ENCODE measurements at regions of chr1 and their contacts with region 1.

Region 1: DNA sequence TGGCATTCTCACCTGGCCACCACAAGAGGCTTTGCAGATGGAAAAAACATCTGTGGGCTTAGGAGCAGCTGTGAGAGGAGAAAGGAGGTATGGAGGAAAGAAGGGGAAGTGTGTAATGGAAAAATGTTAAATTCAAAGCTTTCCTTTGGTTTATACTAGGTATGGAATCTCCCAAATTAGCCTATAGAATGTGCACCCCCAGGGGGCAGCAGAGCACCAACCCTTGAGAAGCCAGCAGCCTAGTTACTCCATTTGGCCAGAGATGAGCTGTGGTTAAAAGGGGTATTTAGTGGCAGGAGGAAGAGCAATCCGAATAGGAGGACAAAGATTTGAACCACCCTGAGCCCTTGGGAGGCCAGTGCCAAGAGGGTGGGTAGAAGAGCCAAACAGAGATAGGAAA is 97.5 kb upstream of the CTTNBP2NL start:
- DNase-seq: peak; percentile 76
- H3K4me3 Mint-ChIP-seq: no peak overlapping the region
- H3K27ac Mint-ChIP-seq: no peak overlapping the region
- H3K4me1 Mint-ChIP-seq: peaks cover 5% of the 10 kb centered on the region
- H3K27me3 Mint-ChIP-seq: no peaks in the 10 kb centered on the region
- CTCF ChIP-seq: peak; percentile 83

Region 2: GRCh38 chr1:112196731-112197130 is 101.8 kb before region 1 on chr1:
- CTCF ChIA-PET with region 1: no interaction called
- POLR2A ChIA-PET with region 1: no interaction called
- intact Hi-C with region 1: no loop called
- DNase-seq: peak; percentile 29
- H3K4me3 Mint-ChIP-seq: no peak overlapping the region
- H3K27ac Mint-ChIP-seq: no peak overlapping the region
- H3K4me1 Mint-ChIP-seq: no peaks in the 10 kb centered on the region
- H3K27me3 Mint-ChIP-seq: peaks cover 38% of the 10 kb centered on the region
- CTCF ChIP-seq: no peak

Region 3: DNA sequence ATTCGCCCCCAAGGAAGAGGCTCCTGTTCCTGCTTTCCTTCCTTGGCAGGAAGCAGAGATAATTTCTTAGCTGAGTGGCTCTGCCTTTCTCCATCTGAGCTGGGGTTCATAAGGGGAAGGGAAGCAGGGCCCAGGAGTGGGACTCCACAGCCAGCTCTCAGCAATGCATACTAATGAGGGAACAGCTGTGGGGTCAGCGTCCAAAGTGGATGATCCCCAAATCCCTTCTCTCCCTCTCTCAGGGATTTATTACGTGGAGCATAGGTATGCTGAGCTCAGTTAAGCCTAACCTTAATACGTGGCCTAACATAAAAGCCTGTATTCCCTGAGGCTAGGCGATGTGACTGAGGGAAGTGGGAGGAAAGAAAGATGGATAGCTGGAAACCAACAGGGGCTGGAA is 10.2 kb after region 1 on chr1:
- CTCF ChIA-PET with region 1: interaction called, 58 read pairs
- POLR2A ChIA-PET with region 1: interaction called, 3 read pairs
- intact Hi-C with region 1: no loop called
- DNase-seq: no peak
- H3K4me3 Mint-ChIP-seq: no peak overlapping the region
- H3K27ac Mint-ChIP-seq: no peak overlapping the region
- H3K4me1 Mint-ChIP-seq: no peaks in the 10 kb centered on the region
- H3K27me3 Mint-ChIP-seq: peaks cover 46% of the 10 kb centered on the region
- CTCF ChIP-seq: no peak

Region 4: DNA sequence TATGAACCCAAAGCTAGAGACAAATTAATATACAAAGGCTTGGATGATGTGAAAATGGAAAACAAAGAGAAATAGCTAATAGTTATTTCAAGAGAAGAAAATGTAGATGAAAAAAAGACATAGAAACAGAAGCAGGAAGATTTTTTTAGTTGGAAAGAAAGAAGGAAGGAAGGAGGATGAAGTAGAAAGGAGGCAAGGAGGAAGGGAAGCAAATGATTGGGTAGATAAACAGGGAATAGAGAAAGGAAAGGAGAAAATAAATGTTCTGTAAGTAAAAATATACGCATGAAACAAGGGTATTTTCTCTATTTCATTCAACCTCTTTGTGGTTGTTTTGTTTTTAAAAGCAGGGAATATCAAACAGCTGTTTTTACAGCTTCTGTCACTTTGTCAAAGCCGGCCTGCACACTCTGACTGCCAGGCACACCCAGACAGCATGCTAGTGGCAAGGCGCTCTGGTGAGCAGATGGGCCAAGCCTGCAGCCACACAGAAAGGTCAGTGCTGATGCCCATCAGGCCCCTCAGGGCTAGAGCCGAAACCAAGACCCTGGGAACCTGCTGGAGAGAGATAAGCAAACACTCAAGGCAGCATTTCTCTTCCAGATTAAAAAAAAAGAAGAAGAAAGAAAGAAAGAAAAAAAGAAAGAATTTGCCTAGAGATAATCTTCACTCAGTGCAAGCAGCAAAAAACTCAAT is 24.6 kb after region 1 on chr1:
- CTCF ChIA-PET with region 1: interaction called, 10 read pairs
- POLR2A ChIA-PET with region 1: interaction called, 3 read pairs
- intact Hi-C with region 1: no loop called
- DNase-seq: no peak
- H3K4me3 Mint-ChIP-seq: no peak overlapping the region
- H3K27ac Mint-ChIP-seq: no peak overlapping the region
- H3K4me1 Mint-ChIP-seq: peaks cover 23% of the 10 kb centered on the region
- H3K27me3 Mint-ChIP-seq: no peaks in the 10 kb centered on the region
- CTCF ChIP-seq: no peak

Region 5: DNA sequence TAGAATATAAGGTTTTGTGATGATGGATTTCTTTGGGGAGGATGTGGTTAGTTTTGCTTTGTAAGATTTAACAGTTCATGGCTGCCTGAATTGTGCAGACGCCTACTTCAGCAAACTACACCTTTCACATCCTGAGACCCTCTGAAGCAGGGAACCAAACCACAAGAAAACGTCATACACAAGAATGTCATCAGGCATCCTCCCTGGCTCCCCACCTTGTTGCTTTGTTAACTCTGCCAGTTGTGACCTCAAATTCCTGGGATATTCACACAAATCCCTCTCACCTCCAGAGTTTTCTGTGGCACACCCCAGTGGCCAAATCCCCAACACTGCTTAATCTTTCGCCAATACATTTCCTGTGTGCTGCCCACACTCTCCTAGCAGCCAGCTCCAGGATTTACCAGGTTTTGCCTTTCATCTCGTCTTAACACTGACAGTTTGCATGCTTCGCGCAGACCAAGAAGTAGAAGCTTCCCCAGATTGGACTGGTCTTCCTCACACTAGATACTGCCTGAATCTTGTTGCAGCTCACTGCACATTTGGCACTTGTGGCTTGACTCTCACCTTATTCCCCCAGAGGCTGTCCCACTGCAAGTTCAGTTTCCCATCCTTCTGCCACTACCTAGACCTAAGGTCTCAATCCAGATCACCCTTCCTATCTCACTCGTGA is 46.3 kb after region 1 on chr1:
- CTCF ChIA-PET with region 1: interaction called, 27 read pairs
- POLR2A ChIA-PET with region 1: no interaction called
- intact Hi-C with region 1: no loop called
- DNase-seq: no peak
- H3K4me3 Mint-ChIP-seq: no peak overlapping the region
- H3K27ac Mint-ChIP-seq: no peak overlapping the region
- H3K4me1 Mint-ChIP-seq: no peaks in the 10 kb centered on the region
- H3K27me3 Mint-ChIP-seq: peaks cover 30% of the 10 kb centered on the region
- CTCF ChIP-seq: no peak

Region 6: DNA sequence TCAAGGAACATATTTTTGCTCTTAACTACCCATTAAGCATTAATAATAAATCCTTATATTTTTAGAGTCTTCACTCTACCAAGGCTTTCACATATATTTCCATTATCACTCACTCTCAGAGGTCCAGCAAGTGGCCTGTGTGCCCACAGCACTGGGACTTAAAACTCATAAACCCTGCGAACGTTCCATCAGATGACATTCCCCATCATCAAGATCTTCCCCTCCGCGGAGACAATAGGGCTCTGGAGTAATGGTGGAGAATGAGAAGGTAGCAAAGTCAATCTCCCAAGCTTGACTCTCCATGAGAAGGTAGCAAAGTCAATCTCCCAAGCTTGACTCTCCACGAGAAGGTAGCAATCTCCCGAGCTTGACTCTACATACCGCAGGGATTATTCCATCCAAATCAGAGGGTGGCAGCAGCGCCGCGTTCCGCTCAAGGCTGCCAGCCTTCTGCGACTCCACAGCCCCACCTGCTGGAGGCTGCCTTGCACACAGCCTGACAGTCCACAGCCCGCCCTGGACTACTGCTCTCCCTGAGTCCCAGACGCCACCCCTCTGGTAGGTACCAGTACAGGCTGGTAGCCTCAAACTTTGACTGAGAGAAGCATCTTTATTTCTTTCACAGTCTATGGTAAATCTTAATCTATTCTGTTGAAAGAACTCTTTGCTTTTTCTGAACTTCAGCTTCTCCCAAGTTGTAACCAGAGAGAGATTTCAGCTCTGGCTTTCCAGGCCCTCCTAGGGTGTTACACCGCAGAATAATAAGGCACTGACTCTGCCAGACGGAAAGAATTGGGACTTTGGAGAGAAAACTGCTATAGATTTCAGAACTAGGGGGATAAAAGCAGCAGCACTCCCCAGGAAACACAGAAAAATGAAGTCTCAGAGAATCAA is 71.1 kb after region 1 on chr1:
- CTCF ChIA-PET with region 1: interaction called, 64 read pairs
- POLR2A ChIA-PET with region 1: interaction called, 4 read pairs
- intact Hi-C with region 1: loop called (anchors 2 kb)
- DNase-seq: peak; percentile 86
- H3K4me3 Mint-ChIP-seq: no peak overlapping the region
- H3K27ac Mint-ChIP-seq: no peak overlapping the region
- H3K4me1 Mint-ChIP-seq: peaks cover 6% of the 10 kb centered on the region
- H3K27me3 Mint-ChIP-seq: peaks cover 19% of the 10 kb centered on the region
- CTCF ChIP-seq: peak; percentile 98